Right cardiac atrium (tissue), 5 donors: ENCODE measurements at regions of chr11 and their contacts with region 1.

Region 1: GRCh38 chr11:29448246-29448877 is 568.5 kb downstream of the KCNA4 start:
- DNase-seq: peak in 1 of 3 donors; percentile 9
- ATAC-seq: no peak
- H3K4me3 ChIP-seq: no peak overlapping the region
- H3K27ac ChIP-seq: no peak overlapping the region
- H3K4me1 ChIP-seq: no peaks in the 10 kb centered on the region
- H3K27me3 ChIP-seq: no peaks in the 10 kb centered on the region

Region 2: DNA sequence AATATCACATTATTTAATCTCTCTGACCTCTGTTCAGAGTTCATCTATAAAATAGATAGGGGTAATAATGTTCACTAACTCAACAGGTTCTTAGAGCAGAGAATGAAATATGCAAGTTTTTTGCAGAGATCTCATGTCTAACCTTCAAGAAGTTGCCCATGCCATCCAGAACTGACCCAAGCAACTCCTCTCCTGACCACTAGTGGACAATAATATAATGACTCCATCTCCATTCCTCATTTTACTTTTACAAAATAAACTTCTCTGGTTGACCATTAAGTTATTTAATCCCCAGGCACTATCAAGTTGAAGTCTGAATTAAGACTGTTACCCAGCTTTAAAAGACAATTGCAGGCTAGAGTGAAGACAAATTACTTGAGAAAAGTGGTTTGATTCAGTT is 185.9 kb after region 1 on chr11:
- intact Hi-C with region 1: loop called in 2 of 4 experiments (anchors 5 to 10 kb)
- DNase-seq: no peak
- ATAC-seq: no peak
- H3K4me3 ChIP-seq: no peak overlapping the region
- H3K27ac ChIP-seq: no peak overlapping the region
- H3K4me1 ChIP-seq: no peaks in the 10 kb centered on the region
- H3K27me3 ChIP-seq: no peaks in the 10 kb centered on the region

Region 3: GRCh38 chr11:30196400-30197206 is 748.2 kb after region 1 on chr11:
- intact Hi-C with region 1: loop called in 2 of 4 experiments (anchors 10 kb)
- DNase-seq: peak; percentile 53 to 84 (median 80)
- ATAC-seq: peak; percentile 81 to 84
- H3K4me3 ChIP-seq: no peak overlapping the region
- H3K27ac ChIP-seq: no peak overlapping the region
- H3K4me1 ChIP-seq: no peaks in the 10 kb centered on the region
- H3K27me3 ChIP-seq: no peaks in the 10 kb centered on the region

Region 4: DNA sequence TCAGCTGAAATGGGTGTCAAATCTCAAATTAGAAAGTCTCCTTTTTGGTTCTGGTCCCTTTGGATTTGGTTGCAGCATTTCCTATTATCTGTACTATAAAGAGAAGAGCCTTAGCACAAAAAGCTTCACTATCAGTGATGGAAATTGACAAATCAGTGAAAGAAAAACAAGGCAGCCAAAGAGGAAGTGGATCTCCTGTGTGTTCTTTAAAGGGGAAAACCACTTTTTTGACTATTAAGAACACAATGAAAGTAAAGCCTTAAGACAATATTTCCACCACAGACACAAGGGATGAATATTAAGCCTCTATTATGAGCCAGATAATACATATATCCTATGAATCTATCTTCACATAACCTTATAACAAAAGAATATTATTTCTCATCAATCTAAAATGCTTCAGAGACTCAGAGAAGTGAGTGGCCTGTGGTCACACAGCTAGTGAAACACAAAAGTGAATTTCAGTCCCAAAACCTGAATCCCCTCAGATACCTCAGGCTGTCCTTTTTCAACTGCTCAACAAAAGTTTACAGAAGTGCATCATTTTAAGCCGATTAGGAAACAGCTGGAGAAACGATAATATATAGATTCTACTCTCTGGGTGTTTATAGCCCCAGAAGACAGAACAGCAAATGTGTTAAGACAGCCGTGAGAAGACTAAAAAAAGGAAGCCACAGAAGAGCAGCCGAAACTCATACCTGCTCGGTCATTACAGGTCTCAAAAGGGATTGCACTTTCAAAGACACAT is 758.1 kb after region 1 on chr11:
- intact Hi-C with region 1: loop called in 1 of 4 experiments (anchors 10 kb)
- DNase-seq: no peak
- ATAC-seq: no peak
- H3K4me3 ChIP-seq: no peak overlapping the region
- H3K27ac ChIP-seq: no peak overlapping the region
- H3K4me1 ChIP-seq: no peaks in the 10 kb centered on the region
- H3K27me3 ChIP-seq: no peaks in the 10 kb centered on the region